CD8-positive, alpha-beta T cell (primary cell): ENCODE measurements at regions of chr15 and their contacts with region 1.

Region 1: DNA sequence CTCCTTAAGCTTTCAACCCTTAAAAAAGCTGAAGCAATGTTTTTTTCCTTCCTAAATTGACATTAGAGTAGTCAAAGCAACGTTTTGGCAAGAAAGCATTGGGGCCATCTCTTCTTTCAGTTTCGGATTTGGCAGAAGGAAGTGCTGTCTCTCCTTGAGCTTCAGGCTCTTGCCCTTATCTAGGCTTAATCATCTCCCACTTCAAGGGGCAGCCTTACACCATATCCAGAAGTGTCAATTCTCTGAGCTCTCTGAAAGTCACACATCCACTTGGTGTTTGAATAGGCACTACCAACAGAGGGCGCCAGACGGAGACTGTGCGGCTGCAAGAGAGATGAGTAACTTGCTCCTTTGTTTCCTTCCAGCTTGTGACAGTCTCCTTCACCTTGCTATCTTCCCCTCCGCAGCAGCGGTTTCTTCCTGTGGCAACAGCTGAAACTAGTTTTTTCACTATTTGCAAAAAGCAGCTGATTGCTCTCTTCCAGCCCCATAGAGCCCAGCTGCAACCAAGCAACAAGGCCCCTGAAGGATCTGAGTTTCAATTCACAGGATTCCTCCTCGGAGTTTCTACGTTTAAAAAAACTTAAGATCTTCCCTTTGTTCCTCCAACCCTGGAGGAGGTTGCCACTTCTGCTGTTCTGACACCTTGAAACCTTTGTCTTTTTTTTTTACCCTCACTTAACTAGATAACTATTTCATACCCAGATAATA is 147.0 kb upstream of the SLCO3A1 start:
- DNase-seq: peak; percentile 58 to 91 (median 80)
- ATAC-seq: peak; percentile 98
- H3K4me3 ChIP-seq: no peak overlapping the region
- H3K4me3 Mint-ChIP-seq: peak overlapping the region; percentile 49
- H3K27ac ChIP-seq: peak overlapping the region in 1 of 2 experiments; percentile 51
- H3K27ac Mint-ChIP-seq: peak overlapping the region; percentile 56
- H3K4me1 ChIP-seq: peaks cover 13% of the 10 kb centered on the region
- H3K4me1 Mint-ChIP-seq: peaks cover 15% of the 10 kb centered on the region
- H3K27me3 ChIP-seq: no peaks in the 10 kb centered on the region
- H3K27me3 Mint-ChIP-seq: no peaks in the 10 kb centered on the region
- CTCF ChIP-seq: peak; percentile 70

Region 2: DNA sequence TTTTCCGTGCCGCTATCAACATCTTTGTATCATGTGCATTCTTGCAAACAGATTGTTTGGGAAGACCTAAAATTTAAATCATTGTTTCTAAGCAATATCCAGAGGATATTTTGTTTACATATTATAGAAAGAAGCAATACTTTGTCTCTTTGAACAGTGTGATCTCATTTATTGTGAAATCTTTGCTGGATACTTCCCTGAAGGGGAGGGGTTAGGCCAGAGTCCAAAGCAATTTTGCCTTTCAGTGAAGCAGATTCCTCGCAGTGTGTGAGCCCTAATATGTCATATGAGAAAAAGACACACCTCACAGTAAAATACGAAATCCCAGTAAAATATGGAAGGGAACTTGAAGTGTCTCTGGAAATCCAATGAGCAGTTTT is 11.7 kb before region 1 on chr15:
- CTCF ChIA-PET with region 1: interaction called, 51 read pairs
- POLR2A ChIA-PET with region 1: no interaction called
- intact Hi-C with region 1: no loop called
- DNase-seq: no peak
- ATAC-seq: no peak
- H3K4me3 ChIP-seq: no peak overlapping the region
- H3K4me3 Mint-ChIP-seq: no peak overlapping the region
- H3K27ac ChIP-seq: no peak overlapping the region
- H3K27ac Mint-ChIP-seq: no peak overlapping the region
- H3K4me1 ChIP-seq: no peaks in the 10 kb centered on the region
- H3K4me1 Mint-ChIP-seq: no peaks in the 10 kb centered on the region
- H3K27me3 ChIP-seq: no peaks in the 10 kb centered on the region
- H3K27me3 Mint-ChIP-seq: no peaks in the 10 kb centered on the region
- CTCF ChIP-seq: no peak

Region 3: GRCh38 chr15:91723959-91724358 is 17.5 kb after region 1 on chr15:
- CTCF ChIA-PET with region 1: interaction called, 11 read pairs
- POLR2A ChIA-PET with region 1: no interaction called
- intact Hi-C with region 1: no loop called
- DNase-seq: no peak
- ATAC-seq: no peak
- H3K4me3 ChIP-seq: no peak overlapping the region
- H3K4me3 Mint-ChIP-seq: no peak overlapping the region
- H3K27ac ChIP-seq: no peak overlapping the region
- H3K27ac Mint-ChIP-seq: no peak overlapping the region
- H3K4me1 ChIP-seq: no peaks in the 10 kb centered on the region
- H3K4me1 Mint-ChIP-seq: no peaks in the 10 kb centered on the region
- H3K27me3 ChIP-seq: no peaks in the 10 kb centered on the region
- H3K27me3 Mint-ChIP-seq: peaks cover 14% of the 10 kb centered on the region
- CTCF ChIP-seq: no peak

Region 4: DNA sequence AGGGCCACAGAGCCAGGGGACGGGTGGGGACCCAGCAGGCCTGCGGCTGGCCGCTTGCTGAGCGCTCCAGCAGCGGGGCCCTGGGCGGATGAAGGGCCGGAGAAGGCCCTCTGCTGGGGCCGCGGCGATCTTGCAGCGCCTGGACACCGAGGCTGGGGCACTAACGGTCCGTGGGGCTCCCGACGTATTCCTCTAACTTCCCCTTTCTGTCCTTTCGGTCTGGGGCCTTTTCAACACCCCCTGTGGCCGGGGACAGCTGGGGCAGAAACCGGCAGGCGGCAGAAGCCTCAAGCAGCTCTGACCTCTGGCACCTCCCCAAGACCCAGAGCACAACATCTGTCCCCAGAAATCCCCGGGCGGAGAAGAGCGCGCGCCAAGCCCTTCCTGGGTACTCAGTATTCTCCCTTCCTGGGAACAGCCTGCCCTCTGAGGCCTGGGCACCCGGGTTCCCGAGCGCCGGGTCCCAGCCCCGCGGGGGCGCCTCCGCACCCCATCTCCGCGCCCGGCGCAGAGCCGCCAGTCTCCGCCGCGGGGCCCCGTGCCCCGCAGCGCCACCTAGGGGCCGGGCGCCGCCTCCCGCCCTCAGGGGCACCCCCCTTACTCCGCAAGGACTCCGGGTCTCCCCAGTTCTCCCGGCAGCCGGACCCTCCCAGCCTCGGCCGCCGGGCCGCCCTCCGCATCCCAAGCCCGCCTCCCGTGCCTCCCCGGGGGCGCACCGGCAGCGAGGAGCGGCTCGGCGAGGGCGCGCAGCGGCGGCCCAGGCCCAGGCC is 146.4 kb after region 1 on chr15:
- CTCF ChIA-PET with region 1: interaction called, 6 read pairs
- POLR2A ChIA-PET with region 1: interaction called, 4 read pairs
- intact Hi-C with region 1: loop called in 1 of 2 experiments (anchors 10 kb)
- DNase-seq: peak; percentile 58 to 88 (median 72)
- ATAC-seq: peak; percentile 57
- H3K4me3 ChIP-seq: peak overlapping the region; percentile 59 to 62
- H3K4me3 Mint-ChIP-seq: peak overlapping the region; percentile 86
- H3K27ac ChIP-seq: peak overlapping the region; percentile 56 to 57
- H3K27ac Mint-ChIP-seq: peak overlapping the region; percentile 91
- H3K4me1 ChIP-seq: peaks cover 56% of the 10 kb centered on the region
- H3K4me1 Mint-ChIP-seq: peaks cover 58% of the 10 kb centered on the region
- H3K27me3 ChIP-seq: no peaks in the 10 kb centered on the region
- H3K27me3 Mint-ChIP-seq: no peaks in the 10 kb centered on the region
- CTCF ChIP-seq: peak; percentile 71

Region 5: DNA sequence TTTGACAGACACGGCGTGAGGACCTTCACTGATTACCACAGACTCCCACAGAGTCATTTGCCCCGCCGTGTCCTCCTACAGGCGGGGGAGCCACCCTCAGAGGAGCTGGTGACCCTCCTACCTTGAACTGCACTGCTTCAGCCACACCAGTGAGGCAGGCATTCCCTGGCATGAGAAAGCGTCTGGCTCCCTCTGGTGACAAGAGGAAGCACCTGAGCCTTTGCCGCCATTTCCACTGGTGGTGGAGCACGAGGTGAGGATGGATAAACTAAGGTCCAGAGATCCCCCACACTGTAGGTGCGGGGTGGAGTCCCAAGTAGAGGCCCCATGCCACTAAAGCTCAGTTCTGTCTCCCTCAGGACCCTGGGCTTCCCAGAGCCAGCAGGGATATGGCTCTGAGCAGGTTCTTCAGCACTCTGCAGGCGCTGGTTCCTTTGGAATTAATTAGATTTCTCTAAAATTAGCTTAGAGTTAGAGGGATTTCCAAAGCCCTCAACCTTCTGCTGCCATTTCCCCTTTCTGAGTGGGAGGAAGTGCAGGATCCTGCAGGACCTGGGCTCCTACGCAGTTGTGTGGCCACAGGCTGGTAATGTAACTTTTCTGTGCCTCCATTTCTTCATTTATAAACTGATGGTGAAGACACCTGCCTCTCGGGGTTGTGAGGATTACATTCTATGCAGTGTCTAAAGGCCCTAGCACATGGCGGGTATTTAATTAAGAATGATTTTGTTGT is 371.0 kb after region 1 on chr15:
- CTCF ChIA-PET with region 1: interaction called, 21 read pairs
- POLR2A ChIA-PET with region 1: interaction called, 3 read pairs
- intact Hi-C with region 1: loop called (anchors 1 to 2 kb)
- DNase-seq: peak in 8 of 9 experiments; percentile 35 to 67 (median 52)
- ATAC-seq: no peak
- H3K4me3 ChIP-seq: no peak overlapping the region
- H3K4me3 Mint-ChIP-seq: no peak overlapping the region
- H3K27ac ChIP-seq: no peak overlapping the region
- H3K27ac Mint-ChIP-seq: no peak overlapping the region
- H3K4me1 ChIP-seq: peaks cover 7% of the 10 kb centered on the region
- H3K4me1 Mint-ChIP-seq: peaks cover 23% of the 10 kb centered on the region
- H3K27me3 ChIP-seq: no peaks in the 10 kb centered on the region
- H3K27me3 Mint-ChIP-seq: no peaks in the 10 kb centered on the region
- CTCF ChIP-seq: peak; percentile 51